ENCODE measurements at regions of chr19 and their contacts with region 1.

Region 1: GRCh38 chr19:28898249-28898648 is 314.7 kb downstream of the UQCRFS1 start:
- DNase-seq: no peak
- H3K4me3 ChIP-seq: no peak overlapping the region
- CTCF ChIP-seq: no peak
- POLR2A ChIP-seq: no peak

Region 2: DNA sequence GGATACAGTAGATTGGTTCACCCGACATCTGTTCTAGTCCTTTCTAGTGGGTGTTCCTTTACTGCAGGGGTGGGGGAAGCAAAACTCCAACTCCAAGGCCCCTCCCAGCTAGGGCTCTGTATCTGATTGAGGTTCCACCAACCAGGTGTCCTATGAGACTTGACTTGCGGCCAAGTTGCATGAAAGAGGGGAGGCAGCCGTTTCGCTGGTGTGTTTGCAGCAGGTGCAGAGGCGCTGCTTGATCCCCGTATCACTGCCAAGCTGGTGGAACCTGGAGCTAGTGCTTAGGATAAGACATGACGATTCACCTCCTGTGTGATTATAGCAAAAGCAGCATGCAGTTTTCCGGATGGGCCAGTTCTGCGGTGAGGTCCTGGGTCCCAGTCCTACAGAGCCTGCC is 23.5 kb before region 1 on chr19:
- intact Hi-C with region 1: loop called (anchors 1 kb)
- DNase-seq: no peak
- H3K4me3 ChIP-seq: no peak overlapping the region
- CTCF ChIP-seq: no peak
- POLR2A ChIP-seq: no peak